K562 (cell line): ENCODE measurements at regions of chr11 and their contacts with region 1.

Region 1: GRCh38 chr11:106021967-106022794 is at the start of gene MSANTD4:
- DNase-seq: peak; percentile 97 to 99 (median 98)
- ATAC-seq: peak; percentile 99
- H3K4me3 ChIP-seq: peak within 1 kb of the TSS; percentile 76
- H3K27ac ChIP-seq: peak within 1 kb of the TSS; percentile 73
- H3K4me1 ChIP-seq: peaks cover 0 to 4% of the 10 kb centered on the region in 2 experiments; a peak in 1 of 5 replicates
- H3K27me3 ChIP-seq: no peaks in the 10 kb centered on the region
- CTCF ChIP-seq: no peak
- EP300 ChIP-seq: no peak
- POLR2A ChIP-seq: peak; percentile 73
- RAD21 ChIP-seq: no peak
- polyA plus RNA-seq, gene MSANTD4: 5.0 to 6.6 TPM

Region 2: DNA sequence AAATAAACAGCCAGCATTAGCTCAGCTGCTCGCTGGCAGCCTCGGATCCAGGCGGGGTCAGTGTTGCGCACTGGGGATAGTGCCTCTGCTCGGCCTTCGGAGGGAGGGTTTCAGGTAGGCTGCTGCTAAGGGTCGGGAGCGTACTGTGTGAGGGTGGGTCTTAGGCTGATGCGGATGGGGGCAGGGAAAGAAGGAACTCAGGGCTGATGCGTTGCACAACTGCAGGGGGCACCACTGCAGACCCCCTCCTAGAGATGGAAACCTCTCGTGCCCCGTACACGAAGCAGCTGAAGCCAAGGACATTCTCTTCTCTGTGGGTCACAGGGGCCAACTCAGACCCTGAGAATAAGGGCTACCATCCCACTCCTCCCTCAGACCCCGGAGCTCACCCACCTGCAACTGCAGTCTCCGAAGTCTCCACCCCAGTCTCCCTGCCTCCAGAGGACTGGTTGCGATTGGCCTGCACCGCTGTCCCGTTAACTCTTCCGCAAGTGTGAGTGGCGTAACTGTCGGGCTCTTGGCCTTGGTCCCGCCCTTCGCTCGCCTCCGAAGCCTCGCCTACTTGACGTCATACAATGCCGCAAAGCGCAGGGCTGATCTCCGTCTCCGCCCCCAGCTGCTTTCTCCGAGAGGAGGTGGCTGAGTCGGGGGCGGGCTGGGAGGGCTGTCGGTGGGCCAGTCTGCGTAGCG is 54.9 kb after region 1 on chr11 and contains the start of gene KBTBD3:
- CTCF ChIA-PET with region 1: no interaction called
- POLR2A ChIA-PET with region 1: no interaction called
- in situ Hi-C with region 1: no loop called
- intact Hi-C with region 1: loop called (anchors 2 kb)
- DNase-seq: peak; percentile 89 to 99 (median 90)
- ATAC-seq: peak; percentile 95
- H3K4me3 ChIP-seq: peak within 1 kb of the TSS; percentile 92
- H3K27ac ChIP-seq: peak within 1 kb of the TSS; percentile 98
- H3K4me1 ChIP-seq: peaks cover 0 to 9% of the 10 kb centered on the region in 2 experiments; a peak in 2 of 5 replicates
- H3K27me3 ChIP-seq: no peaks in the 10 kb centered on the region
- CTCF ChIP-seq: peak; percentile 39 to 67 (median 61); a peak in 5 of 6 replicates
- EP300 ChIP-seq: no peak
- POLR2A ChIP-seq: no peak
- RAD21 ChIP-seq: no peak
- polyA plus RNA-seq, gene KBTBD3: 28.2 to 31.2 TPM

Region 3: GRCh38 chr11:106087815-106088435 is 65.7 kb after region 1 on chr11:
- CTCF ChIA-PET with region 1: no interaction called
- POLR2A ChIA-PET with region 1: no interaction called
- in situ Hi-C with region 1: no loop called
- intact Hi-C with region 1: no loop called
- DNase-seq: peak in 1 of 4 experiments; percentile 70
- ATAC-seq: peak; percentile 84
- H3K4me3 ChIP-seq: no peak overlapping the region
- H3K27ac ChIP-seq: no peak overlapping the region
- H3K4me1 ChIP-seq: peaks cover 0 to 6% of the 10 kb centered on the region in 2 experiments; a peak in 2 of 5 replicates
- H3K27me3 ChIP-seq: no peaks in the 10 kb centered on the region
- CTCF ChIP-seq: peak; percentile 57 to 80 (median 76)
- EP300 ChIP-seq: no peak
- POLR2A ChIP-seq: no peak
- RAD21 ChIP-seq: peak; percentile 53 to 64